ENCODE measurements at regions of chr16 and their contacts with region 1.

Region 1: GRCh38 chr16:51636920-51637769 is 486.1 kb upstream of the SALL1 start:
- DNase-seq: no peak
- ATAC-seq: no peak
- H3K4me3 ChIP-seq: 0 out of 4 replicates have a peak overlapping the region, but pooled peaks of 1 of the 2 experiments have one; percentile 14
- H3K27ac ChIP-seq: no peak overlapping the region
- H3K4me1 ChIP-seq: no peaks in the 10 kb centered on the region
- H3K27me3 ChIP-seq: no peaks in the 10 kb centered on the region
- CTCF ChIP-seq: no peak

Region 2: DNA sequence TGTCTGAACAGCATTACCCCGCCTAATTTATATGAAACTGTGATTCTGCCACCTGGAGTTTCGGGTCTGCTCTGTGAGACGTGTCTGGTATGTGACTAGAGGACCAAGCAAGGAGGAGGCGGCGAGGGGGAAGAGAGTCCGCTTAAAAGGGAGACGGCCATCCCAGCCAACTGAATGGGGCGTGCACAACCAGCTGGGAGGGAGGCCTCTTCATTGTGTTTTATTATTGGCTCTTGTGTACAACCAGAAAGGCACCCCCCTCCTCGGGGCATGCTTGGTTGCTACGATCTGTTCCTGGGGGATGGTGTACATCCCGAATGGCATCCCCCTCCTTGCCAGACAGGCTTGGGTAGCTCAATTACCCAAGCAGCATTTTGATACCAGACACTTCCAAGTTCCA is 101.6 kb before region 1 on chr16:
- CTCF ChIA-PET with region 1: no interaction called
- POLR2A ChIA-PET with region 1: no interaction called
- in situ Hi-C with region 1: no loop called
- intact Hi-C with region 1: no loop called
- DNase-seq: no peak
- ATAC-seq: no peak
- H3K4me3 ChIP-seq: no peak overlapping the region
- H3K27ac ChIP-seq: no peak overlapping the region
- H3K4me1 ChIP-seq: no peaks in the 10 kb centered on the region
- H3K27me3 ChIP-seq: no peaks in the 10 kb centered on the region
- CTCF ChIP-seq: no peak

Region 3: DNA sequence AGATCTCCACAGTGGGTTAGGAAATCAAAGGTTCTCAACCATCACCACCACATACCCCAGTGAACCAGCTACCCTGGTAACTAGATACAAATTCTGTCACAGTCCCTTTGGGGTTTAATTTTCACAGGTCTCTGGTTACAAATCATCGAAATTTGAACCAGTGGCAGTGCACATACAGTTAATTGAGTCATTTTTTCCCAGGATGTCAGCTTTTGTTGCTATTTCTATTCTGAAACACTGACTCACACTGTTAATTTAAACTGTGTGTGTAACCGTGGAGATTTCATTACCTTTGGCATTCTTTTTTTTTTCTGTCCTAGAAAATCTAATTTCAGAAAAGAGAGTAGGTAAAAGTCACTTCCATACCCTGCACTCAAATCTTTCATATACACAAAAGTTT is 398.3 kb after region 1 on chr16:
- CTCF ChIA-PET with region 1: interaction called, 13 read pairs
- POLR2A ChIA-PET with region 1: no interaction called
- in situ Hi-C with region 1: no loop called
- intact Hi-C with region 1: no loop called
- DNase-seq: no peak
- ATAC-seq: no peak
- H3K4me3 ChIP-seq: no peak overlapping the region
- H3K27ac ChIP-seq: no peak overlapping the region
- H3K4me1 ChIP-seq: no peaks in the 10 kb centered on the region
- H3K27me3 ChIP-seq: no peaks in the 10 kb centered on the region
- CTCF ChIP-seq: no peak

Measured in Panc1 (cell line).